CD4-positive, alpha-beta memory T cell (primary cell): ENCODE measurements at regions of chr21 and their contacts with region 1.

Region 1: DNA sequence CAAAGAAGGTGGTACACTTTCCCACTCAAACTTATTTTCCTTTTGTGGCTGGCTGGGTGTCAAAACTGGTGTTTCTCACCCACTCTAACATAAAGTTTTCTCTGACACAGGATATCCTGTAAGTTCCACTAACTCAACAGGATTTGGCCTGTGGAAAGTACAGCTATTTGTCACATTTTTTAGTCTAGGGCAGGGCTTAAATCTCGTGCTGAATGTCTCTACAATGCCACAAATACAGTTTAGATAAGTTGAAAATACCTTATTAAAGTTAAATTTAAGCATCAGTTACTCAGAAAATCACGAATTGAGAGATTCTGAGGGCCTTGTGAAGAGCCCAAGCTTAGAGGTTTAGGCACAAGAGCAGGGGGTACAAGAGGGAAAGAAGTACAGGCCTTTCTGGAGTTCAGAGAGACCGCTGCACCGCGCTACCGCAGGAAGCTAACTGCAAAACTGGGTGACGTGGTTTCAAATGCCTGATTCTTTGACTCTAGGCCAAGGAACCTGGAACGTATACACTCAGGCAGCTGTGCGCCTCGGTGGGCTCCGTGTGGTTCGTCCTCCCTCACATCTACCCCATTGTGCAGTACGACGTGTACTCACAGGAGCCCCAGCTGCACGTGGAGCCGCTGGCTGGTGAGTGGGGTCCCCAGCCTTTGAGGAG is 23.4 kb upstream of the PWP2 start:
- DNase-seq: peak; percentile 79 to 86 (median 83)
- H3K4me3 ChIP-seq: peak overlapping the region; percentile 1 to 30
- H3K4me3 Mint-ChIP-seq: peak overlapping the region; percentile 74 to 82 (median 81)
- H3K27ac ChIP-seq: peak overlapping the region; percentile 71
- H3K27ac Mint-ChIP-seq: peak overlapping the region; percentile 89 to 98 (median 95)
- H3K4me1 ChIP-seq: peaks cover 97% of the 10 kb centered on the region
- H3K4me1 Mint-ChIP-seq: peaks cover 62 to 97% (median 84%) of the 10 kb centered on the region in 4 donors
- H3K27me3 ChIP-seq: no peaks in the 10 kb centered on the region
- H3K27me3 Mint-ChIP-seq: no peaks in the 10 kb centered on the region

Region 2: DNA sequence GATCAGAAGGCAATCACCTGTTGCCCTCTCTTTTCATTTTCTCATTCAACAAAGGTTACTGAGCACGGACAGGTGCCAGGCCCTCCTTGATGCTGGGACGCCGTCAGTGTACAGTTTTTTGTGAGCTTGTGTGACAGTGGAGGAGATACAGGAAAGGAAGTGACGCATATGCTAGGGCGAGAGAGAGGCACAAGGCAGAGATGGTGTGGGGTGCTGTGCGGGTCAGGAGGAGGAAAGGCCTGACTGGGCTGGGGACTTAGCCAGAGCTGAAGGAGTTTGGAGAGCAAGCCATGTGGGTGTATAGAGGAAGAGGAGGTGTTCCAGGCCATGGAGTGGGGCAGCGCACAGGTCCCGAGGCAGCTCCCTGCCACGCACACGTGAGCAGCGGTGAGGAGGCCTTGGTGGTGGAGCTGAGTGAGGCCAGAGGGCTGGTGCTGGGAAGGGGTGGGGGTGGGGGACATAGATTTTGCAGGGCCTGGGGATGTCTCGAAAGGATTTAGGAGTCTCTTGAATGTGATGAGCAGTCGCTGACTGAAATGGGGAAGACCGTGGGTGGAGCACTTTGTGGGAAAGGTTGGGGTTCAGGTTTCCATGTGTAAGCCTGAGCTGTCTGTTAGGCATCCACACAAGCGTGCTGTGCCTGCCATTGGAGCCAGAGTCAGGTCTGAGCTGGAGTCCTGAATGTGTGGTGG is 25.7 kb before region 1 on chr21:
- CTCF ChIA-PET with region 1: no interaction called
- POLR2A ChIA-PET with region 1: interaction called, 19 read pairs
- intact Hi-C with region 1: no loop called
- DNase-seq: peak; percentile 52 to 70 (median 61)
- H3K4me3 ChIP-seq: no peak overlapping the region
- H3K4me3 Mint-ChIP-seq: peak overlapping the region; percentile 81 to 91 (median 86)
- H3K27ac ChIP-seq: peak overlapping the region; percentile 59
- H3K27ac Mint-ChIP-seq: peak overlapping the region; percentile 85 to 100 (median 98)
- H3K4me1 ChIP-seq: peaks cover 13% of the 10 kb centered on the region
- H3K4me1 Mint-ChIP-seq: peaks cover 24 to 39% (median 31%) of the 10 kb centered on the region in 4 donors
- H3K27me3 ChIP-seq: no peaks in the 10 kb centered on the region
- H3K27me3 Mint-ChIP-seq: no peaks in the 10 kb centered on the region

Region 3: GRCh38 chr21:44065428-44065827 is 18.3 kb before region 1 on chr21:
- CTCF ChIA-PET with region 1: interaction called, 6 read pairs
- POLR2A ChIA-PET with region 1: interaction called, 38 read pairs
- intact Hi-C with region 1: loop called (anchors 1 kb)
- DNase-seq: peak; percentile 81 to 93 (median 88)
- H3K4me3 ChIP-seq: peak overlapping the region in 1 of 2 donors; percentile 20
- H3K4me3 Mint-ChIP-seq: peak overlapping the region in 7 of 8 donors; percentile 69 to 87 (median 82)
- H3K27ac ChIP-seq: peak overlapping the region; percentile 70
- H3K27ac Mint-ChIP-seq: peak overlapping the region; percentile 90 to 100 (median 99)
- H3K4me1 ChIP-seq: peaks cover 19% of the 10 kb centered on the region
- H3K4me1 Mint-ChIP-seq: peaks cover 29 to 49% (median 40%) of the 10 kb centered on the region in 4 donors
- H3K27me3 ChIP-seq: no peaks in the 10 kb centered on the region
- H3K27me3 Mint-ChIP-seq: no peaks in the 10 kb centered on the region

Region 4: DNA sequence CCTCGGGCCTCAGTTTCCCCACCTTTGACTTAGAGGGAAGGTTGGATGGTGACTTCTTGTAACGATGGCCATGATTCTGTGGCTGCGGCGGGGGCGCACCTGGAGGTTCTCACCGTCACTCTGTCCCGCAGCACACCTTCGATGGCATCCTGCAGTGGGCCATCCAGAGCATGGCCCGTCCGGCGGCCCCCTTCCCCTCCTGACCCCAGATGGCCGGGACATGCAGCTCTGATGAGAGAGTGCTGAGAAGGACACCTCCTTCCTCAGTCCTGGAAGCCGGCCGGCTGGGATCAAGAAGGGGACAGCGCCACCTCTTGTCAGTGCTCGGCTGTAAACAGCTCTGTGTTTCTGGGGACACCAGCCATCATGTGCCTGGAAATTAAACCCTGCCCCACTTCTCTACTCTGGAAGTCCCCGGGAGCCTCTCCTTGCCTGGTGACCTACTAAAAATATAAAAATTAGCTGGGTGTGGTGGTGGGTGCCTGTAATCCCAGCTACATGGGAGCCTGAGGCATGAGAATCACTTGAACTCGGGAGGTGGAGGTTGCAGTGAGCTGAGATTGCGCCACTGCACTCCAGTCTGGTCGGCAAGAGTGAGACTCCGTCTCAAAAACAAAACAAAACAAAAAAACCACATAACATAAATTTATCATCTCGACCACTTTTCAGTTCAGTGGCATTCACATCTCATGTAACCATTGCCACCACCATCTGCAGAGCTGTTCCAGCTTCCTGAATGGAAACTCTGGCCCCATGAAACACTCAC is 213.9 kb after region 1 on chr21:
- CTCF ChIA-PET with region 1: interaction called, 17 read pairs
- POLR2A ChIA-PET with region 1: interaction called, 3 read pairs
- intact Hi-C with region 1: no loop called
- DNase-seq: peak; percentile 72 to 84 (median 74)
- H3K4me3 ChIP-seq: no peak overlapping the region
- H3K4me3 Mint-ChIP-seq: peak overlapping the region; percentile 36 to 94 (median 68)
- H3K27ac ChIP-seq: peak overlapping the region; percentile 36
- H3K27ac Mint-ChIP-seq: peak overlapping the region; percentile 83 to 94 (median 89)
- H3K4me1 ChIP-seq: peaks cover 71% of the 10 kb centered on the region
- H3K4me1 Mint-ChIP-seq: peaks cover 21 to 52% (median 42%) of the 10 kb centered on the region in 4 donors
- H3K27me3 ChIP-seq: no peaks in the 10 kb centered on the region
- H3K27me3 Mint-ChIP-seq: no peaks in the 10 kb centered on the region